ENCODE measurements at regions of chr6 and their contacts with region 1.

Region 1: GRCh38 chr6:31158140-31158862 is at the start of gene TCF19:
- DNase-seq: peak; percentile 98 to 99 (median 98)
- H3K4me3 ChIP-seq: peak within 1 kb of the TSS; percentile 59 to 70
- H3K4me3 Mint-ChIP-seq: peak within 1 kb of the TSS; percentile 87 to 95 (median 90)
- H3K27ac ChIP-seq: peak within 1 kb of the TSS; percentile 69
- H3K27ac Mint-ChIP-seq: peak within 1 kb of the TSS; percentile 75 to 95 (median 93)
- H3K4me1 ChIP-seq: peaks cover 22% of the 10 kb centered on the region
- H3K4me1 Mint-ChIP-seq: peaks cover 14 to 34% (median 24%) of the 10 kb centered on the region in 4 donors
- H3K27me3 ChIP-seq: no peaks in the 10 kb centered on the region
- H3K27me3 Mint-ChIP-seq: no peaks in the 10 kb centered on the region
- total RNA-seq, gene TCF19: 9.0 to 9.9 TPM

Region 2: GRCh38 chr6:31139599-31139998 is 18.7 kb before region 1 on chr6:
- CTCF ChIA-PET with region 1: interaction called, 6 read pairs
- POLR2A ChIA-PET with region 1: interaction called, 4 read pairs
- intact Hi-C with region 1: loop called (anchors 1 kb)
- DNase-seq: no peak
- H3K4me3 ChIP-seq: no peak overlapping the region
- H3K4me3 Mint-ChIP-seq: no peak overlapping the region
- H3K27ac ChIP-seq: no peak overlapping the region
- H3K27ac Mint-ChIP-seq: peak overlapping the region in 2 of 7 donors; percentile 32 to 63
- H3K4me1 ChIP-seq: peaks cover 5% of the 10 kb centered on the region
- H3K4me1 Mint-ChIP-seq: peaks cover 3 to 11% (median 5%) of the 10 kb centered on the region in 4 donors
- H3K27me3 ChIP-seq: no peaks in the 10 kb centered on the region
- H3K27me3 Mint-ChIP-seq: peaks cover 0 to 2% of the 10 kb centered on the region in 2 donors

Region 3: DNA sequence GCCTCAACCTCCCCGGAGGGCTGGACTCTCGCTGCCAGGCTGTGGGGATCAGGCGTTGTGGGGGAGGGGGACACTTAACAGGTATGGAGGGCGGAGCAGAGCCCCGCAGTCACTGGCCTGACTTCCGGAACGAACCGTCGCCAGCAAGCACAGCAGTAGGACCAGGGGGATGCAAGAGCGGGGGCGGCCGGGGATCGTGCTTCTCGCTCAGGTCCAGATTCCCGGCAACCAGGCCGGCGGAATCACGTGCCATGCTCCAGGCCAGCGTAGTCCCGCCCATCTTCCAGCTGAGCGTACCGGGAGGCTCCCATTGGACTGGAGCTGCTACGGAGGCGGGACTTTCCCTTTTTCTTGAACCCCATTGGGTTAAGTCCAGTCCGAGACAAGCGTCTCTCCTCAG is 22.2 kb after region 1 on chr6:
- CTCF ChIA-PET with region 1: no interaction called
- POLR2A ChIA-PET with region 1: interaction called, 3 read pairs
- intact Hi-C with region 1: loop called (anchors 1 kb)
- DNase-seq: peak; percentile 55 to 79 (median 66)
- H3K4me3 ChIP-seq: peak overlapping the region in 1 of 2 donors; percentile 22
- H3K4me3 Mint-ChIP-seq: peak overlapping the region; percentile 80 to 89 (median 84)
- H3K27ac ChIP-seq: peak overlapping the region; percentile 43
- H3K27ac Mint-ChIP-seq: peak overlapping the region in 6 of 7 donors; percentile 25 to 76 (median 66)
- H3K4me1 ChIP-seq: peaks cover 11% of the 10 kb centered on the region
- H3K4me1 Mint-ChIP-seq: peaks cover 11 to 27% (median 17%) of the 10 kb centered on the region in 4 donors
- H3K27me3 ChIP-seq: no peaks in the 10 kb centered on the region
- H3K27me3 Mint-ChIP-seq: no peaks in the 10 kb centered on the region

Region 4: GRCh38 chr6:31271641-31272357 is 113.5 kb after region 1 on chr6 and contains the start of gene HLA-C:
- CTCF ChIA-PET with region 1: no interaction called
- POLR2A ChIA-PET with region 1: interaction called, 4 read pairs
- intact Hi-C with region 1: loop called (anchors 1 kb)
- DNase-seq: peak; percentile 92 to 98 (median 93)
- H3K4me3 ChIP-seq: peak within 1 kb of the TSS; percentile 88 to 94
- H3K4me3 Mint-ChIP-seq: peak within 1 kb of the TSS; percentile 95 to 100 (median 98)
- H3K27ac ChIP-seq: peak within 1 kb of the TSS; percentile 100
- H3K27ac Mint-ChIP-seq: peak within 1 kb of the TSS; percentile 99 to 100 (median 100)
- H3K4me1 ChIP-seq: peaks cover 51% of the 10 kb centered on the region
- H3K4me1 Mint-ChIP-seq: peaks cover 45 to 77% (median 54%) of the 10 kb centered on the region in 4 donors
- H3K27me3 ChIP-seq: no peaks in the 10 kb centered on the region
- H3K27me3 Mint-ChIP-seq: peaks cover 0 to 2% of the 10 kb centered on the region in 2 donors
- total RNA-seq, gene HLA-C: 1,481 to 1,487 TPM

Region 5: DNA sequence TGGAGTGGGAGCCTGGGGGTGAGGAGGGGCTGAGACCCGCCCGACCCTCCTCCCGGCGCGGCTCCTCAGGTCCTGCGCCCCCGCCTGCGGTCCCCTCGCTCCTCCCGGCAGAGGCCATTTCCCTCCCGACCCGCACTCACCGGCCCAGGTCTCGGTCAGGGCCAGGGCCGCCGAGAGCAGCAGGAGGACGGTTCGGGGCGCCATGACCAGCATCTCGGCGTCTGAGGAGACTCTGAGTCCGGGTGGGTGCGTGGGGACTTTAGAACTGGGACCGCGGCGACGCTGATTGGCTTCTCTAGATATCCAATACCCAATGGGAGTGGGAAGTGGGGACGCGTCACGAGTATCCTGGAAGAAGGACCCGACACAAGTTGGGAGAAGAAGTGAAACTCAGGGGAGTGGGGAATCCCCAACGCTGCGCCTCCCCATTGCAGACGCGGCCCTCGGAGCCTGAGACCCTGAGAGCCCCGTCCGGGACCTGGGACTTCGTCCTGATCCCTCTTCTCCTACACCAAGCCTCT is 198.7 kb after region 1 on chr6 and contains the start of gene HLA-B:
- CTCF ChIA-PET with region 1: no interaction called
- POLR2A ChIA-PET with region 1: interaction called, 5 read pairs
- intact Hi-C with region 1: loop called (anchors 2 kb)
- DNase-seq: peak; percentile 82 to 93 (median 85)
- H3K4me3 ChIP-seq: peak within 1 kb of the TSS; percentile 68 to 86
- H3K4me3 Mint-ChIP-seq: peak within 1 kb of the TSS; percentile 97 to 99 (median 99)
- H3K27ac ChIP-seq: peak within 1 kb of the TSS; percentile 99
- H3K27ac Mint-ChIP-seq: peak within 1 kb of the TSS; percentile 100
- H3K4me1 ChIP-seq: peaks cover 59% of the 10 kb centered on the region
- H3K4me1 Mint-ChIP-seq: peaks cover 44 to 82% (median 55%) of the 10 kb centered on the region in 4 donors
- H3K27me3 ChIP-seq: no peaks in the 10 kb centered on the region
- H3K27me3 Mint-ChIP-seq: peaks cover 1% of the 10 kb centered on the region in 2 donors
- total RNA-seq, gene HLA-B: 5,565 to 5,762 TPM